Ascending aorta (tissue), 2 donors: ENCODE measurements at regions of chr21 and their contacts with region 1.

Region 1: DNA sequence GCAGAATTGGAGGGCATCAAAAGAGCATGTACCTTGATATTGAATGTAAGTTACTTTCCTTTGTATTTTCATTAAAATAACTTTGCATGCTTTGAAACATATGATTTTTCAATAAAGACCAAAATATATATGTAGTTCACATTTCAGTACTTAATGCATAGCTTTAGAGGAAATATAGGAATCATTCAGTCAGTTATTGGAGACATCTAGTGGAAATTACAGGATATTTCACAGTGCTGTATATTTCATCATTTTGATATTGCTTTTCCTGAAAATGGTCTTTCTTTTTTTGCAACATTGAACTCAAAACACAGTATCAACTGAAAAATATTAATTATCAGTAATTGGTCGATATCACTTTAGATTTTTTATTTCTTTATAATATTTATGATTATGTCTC is 375.8 kb downstream of the NCAM2 start:
- DNase-seq: no peak
- H3K4me3 ChIP-seq: no peak overlapping the region
- H3K27ac ChIP-seq: no peak overlapping the region
- H3K4me1 ChIP-seq: no peaks in the 10 kb centered on the region
- H3K27me3 ChIP-seq: no peaks in the 10 kb centered on the region
- CTCF ChIP-seq: peak in 1 of 3 experiments; percentile 16

Region 2: DNA sequence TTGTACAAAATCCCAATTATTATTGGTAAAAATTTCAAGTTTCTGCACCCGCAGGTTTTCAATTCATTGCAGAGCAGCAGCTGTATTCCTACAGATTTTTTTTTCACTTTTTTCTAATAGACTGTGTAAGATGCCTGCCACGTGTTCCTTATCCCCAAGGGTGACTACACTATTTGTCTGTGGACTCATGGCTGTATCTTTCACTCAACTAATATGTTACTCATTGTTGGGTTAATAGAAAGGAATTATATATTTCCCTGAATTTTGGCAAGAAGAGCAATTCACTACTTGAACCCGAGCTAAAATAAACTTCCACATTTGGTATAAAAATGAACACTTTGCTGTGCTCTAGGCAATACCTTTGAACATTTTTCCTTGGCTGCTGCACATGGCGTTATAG is 217.0 kb before region 1 on chr21:
- intact Hi-C with region 1: loop called (anchors 10 kb)
- DNase-seq: no peak
- H3K4me3 ChIP-seq: no peak overlapping the region
- H3K27ac ChIP-seq: no peak overlapping the region
- H3K4me1 ChIP-seq: no peaks in the 10 kb centered on the region
- H3K27me3 ChIP-seq: no peaks in the 10 kb centered on the region
- CTCF ChIP-seq: no peak